CD14-positive monocyte (primary cell): ENCODE measurements at regions of chr19 and their contacts with region 1.

Region 1: DNA sequence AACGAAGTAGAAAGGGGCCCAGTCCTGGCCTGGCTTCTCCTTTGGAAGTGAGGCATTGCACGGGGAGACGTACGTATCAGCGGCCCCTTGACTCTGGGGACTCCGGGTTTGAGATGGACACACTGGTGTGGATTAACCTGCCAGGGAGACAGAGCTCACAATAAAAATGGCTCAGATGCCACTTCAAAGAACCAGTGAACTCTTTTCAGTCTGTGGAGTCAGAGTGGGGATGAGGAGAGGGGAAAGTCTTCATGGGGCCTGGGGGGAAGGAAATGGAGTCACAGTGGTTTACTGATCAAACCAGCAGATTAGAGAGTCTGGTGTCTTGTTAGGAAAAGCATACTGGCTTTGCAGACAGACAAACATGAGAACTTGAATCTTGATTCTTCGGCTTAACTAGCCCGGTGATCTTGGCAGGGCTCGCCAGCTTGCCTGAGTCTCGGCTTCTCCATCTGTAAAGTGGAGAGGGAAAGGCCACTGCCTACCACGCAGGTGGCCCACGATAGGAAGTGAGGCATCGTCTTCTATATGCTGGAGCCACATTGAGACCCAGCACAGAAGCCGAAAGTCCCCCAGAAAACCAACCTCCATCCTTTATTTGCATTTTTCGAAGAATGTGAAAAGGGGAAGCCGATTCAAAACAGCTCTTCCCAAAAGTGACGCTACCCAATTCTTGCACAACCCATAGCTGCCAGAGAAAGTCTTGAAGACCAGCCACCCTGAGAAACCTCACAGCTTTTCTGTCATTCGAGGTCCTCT is at the start of gene FFAR1:
- DNase-seq: peak; percentile 91 to 95 (median 91)
- H3K4me3 ChIP-seq: peak within 1 kb of the TSS in 1 of 3 experiments; percentile 45
- H3K4me3 Mint-ChIP-seq: peak within 1 kb of the TSS; percentile 39 to 82
- H3K27ac ChIP-seq: peak within 1 kb of the TSS; percentile 63 to 86
- H3K27ac Mint-ChIP-seq: peak within 1 kb of the TSS; percentile 88 to 98 (median 95)
- H3K4me1 ChIP-seq: peaks cover 31 to 39% of the 10 kb centered on the region in 2 donors
- H3K4me1 Mint-ChIP-seq: peaks cover 37% of the 10 kb centered on the region
- H3K27me3 ChIP-seq: no peaks in the 10 kb centered on the region
- H3K27me3 Mint-ChIP-seq: peaks cover 1 to 24% (median 9%) of the 10 kb centered on the region in 3 donors
- CTCF ChIP-seq: no peak
- polyA plus RNA-seq, gene FFAR1: 0.04 TPM in 1 of 3 donors, not detected in the others

Region 2: DNA sequence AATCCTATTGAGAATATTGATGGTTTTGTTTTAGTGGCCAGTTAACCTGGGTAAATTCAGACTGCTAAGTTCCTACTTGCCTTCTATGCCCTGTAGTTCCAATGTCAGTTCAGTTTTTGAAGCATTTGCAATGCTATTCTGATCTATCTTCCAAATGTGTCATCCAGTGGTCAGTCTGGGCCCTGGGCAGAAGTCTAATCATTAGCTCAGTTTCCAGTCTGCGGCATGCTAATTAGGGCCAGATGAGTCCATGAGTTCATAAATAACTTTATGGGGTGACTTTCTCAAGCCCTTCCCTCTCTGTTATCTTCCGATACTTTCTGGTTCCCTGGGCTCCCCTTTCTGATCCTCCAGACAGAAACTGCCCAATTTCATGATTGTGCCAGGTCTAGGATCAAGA is 151.5 kb before region 1 on chr19:
- intact Hi-C with region 1: loop called in 1 of 2 experiments (anchors 10 kb)
- DNase-seq: no peak
- H3K4me3 ChIP-seq: no peak overlapping the region
- H3K4me3 Mint-ChIP-seq: no peak overlapping the region
- H3K27ac ChIP-seq: no peak overlapping the region
- H3K27ac Mint-ChIP-seq: no peak overlapping the region
- H3K4me1 ChIP-seq: no peaks in the 10 kb centered on the region
- H3K4me1 Mint-ChIP-seq: no peaks in the 10 kb centered on the region
- H3K27me3 ChIP-seq: peaks cover 0 to 3% of the 10 kb centered on the region in 2 donors
- H3K27me3 Mint-ChIP-seq: peaks cover 0 to 6% (median 4%) of the 10 kb centered on the region in 3 donors
- CTCF ChIP-seq: no peak

Region 3: GRCh38 chr19:35279985-35280821 is 67.1 kb before region 1 on chr19:
- intact Hi-C with region 1: loop called in 1 of 2 experiments (anchors 5 kb)
- DNase-seq: no peak
- H3K4me3 ChIP-seq: no peak overlapping the region
- H3K4me3 Mint-ChIP-seq: no peak overlapping the region
- H3K27ac ChIP-seq: no peak overlapping the region
- H3K27ac Mint-ChIP-seq: peak overlapping the region in 3 of 7 donors; percentile 2 to 61 (median 32)
- H3K4me1 ChIP-seq: peaks cover 31 to 42% of the 10 kb centered on the region in 2 donors
- H3K4me1 Mint-ChIP-seq: peaks cover 42% of the 10 kb centered on the region
- H3K27me3 ChIP-seq: no peaks in the 10 kb centered on the region
- H3K27me3 Mint-ChIP-seq: peaks cover 13 to 16% (median 14%) of the 10 kb centered on the region in 3 donors
- CTCF ChIP-seq: no peak

Region 4: DNA sequence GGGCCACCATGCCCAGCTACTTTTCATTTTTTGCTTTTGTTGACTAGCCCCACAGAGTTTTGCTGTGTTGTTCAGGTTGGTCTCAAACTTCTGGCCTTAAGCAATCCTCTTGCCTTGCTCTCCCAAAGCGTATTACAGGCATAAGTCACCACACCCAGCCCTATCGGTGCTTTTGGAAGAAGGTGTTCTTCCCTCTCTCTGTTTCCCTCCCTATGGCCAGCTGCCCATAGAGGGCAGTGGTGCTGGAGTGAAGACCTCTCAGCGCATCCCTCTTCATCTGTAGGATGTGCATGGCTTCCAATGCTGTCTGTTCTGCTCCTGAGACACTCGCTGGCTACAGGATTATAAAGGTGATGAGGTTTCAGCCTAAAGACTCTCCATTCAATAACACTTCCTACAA is 19.7 kb before region 1 on chr19:
- intact Hi-C with region 1: loop called in 1 of 2 experiments (anchors 2 kb)
- DNase-seq: peak in 2 of 3 donors; percentile 25 to 40
- H3K4me3 ChIP-seq: no peak overlapping the region
- H3K4me3 Mint-ChIP-seq: no peak overlapping the region
- H3K27ac ChIP-seq: no peak overlapping the region
- H3K27ac Mint-ChIP-seq: peak overlapping the region in 3 of 7 donors; percentile 6 to 30 (median 26)
- H3K4me1 ChIP-seq: peaks cover 35 to 53% of the 10 kb centered on the region in 2 donors
- H3K4me1 Mint-ChIP-seq: peaks cover 41% of the 10 kb centered on the region
- H3K27me3 ChIP-seq: no peaks in the 10 kb centered on the region
- H3K27me3 Mint-ChIP-seq: peaks cover 1 to 4% (median 2%) of the 10 kb centered on the region in 3 donors
- CTCF ChIP-seq: peak; percentile 41